ENCODE measurements at regions of chr14 and their contacts with region 1.

Region 1: GRCh38 chr14:39432179-39432618 is at the start of gene FBXO33:
- DNase-seq: peak; percentile 99
- total RNA-seq, gene FBXO33: 6.3 TPM

Region 2: GRCh38 chr14:39174560-39175444 is 257.4 kb before region 1 on chr14 and contains the start of gene PNN:
- intact Hi-C with region 1: loop called (anchors 2 kb)
- DNase-seq: peak; percentile 99
- total RNA-seq, gene PNN: 30.0 TPM

Measured in cardiac septum (tissue), 1 donor.